ENCODE measurements at regions of chr14 and their contacts with region 1.

Region 1: DNA sequence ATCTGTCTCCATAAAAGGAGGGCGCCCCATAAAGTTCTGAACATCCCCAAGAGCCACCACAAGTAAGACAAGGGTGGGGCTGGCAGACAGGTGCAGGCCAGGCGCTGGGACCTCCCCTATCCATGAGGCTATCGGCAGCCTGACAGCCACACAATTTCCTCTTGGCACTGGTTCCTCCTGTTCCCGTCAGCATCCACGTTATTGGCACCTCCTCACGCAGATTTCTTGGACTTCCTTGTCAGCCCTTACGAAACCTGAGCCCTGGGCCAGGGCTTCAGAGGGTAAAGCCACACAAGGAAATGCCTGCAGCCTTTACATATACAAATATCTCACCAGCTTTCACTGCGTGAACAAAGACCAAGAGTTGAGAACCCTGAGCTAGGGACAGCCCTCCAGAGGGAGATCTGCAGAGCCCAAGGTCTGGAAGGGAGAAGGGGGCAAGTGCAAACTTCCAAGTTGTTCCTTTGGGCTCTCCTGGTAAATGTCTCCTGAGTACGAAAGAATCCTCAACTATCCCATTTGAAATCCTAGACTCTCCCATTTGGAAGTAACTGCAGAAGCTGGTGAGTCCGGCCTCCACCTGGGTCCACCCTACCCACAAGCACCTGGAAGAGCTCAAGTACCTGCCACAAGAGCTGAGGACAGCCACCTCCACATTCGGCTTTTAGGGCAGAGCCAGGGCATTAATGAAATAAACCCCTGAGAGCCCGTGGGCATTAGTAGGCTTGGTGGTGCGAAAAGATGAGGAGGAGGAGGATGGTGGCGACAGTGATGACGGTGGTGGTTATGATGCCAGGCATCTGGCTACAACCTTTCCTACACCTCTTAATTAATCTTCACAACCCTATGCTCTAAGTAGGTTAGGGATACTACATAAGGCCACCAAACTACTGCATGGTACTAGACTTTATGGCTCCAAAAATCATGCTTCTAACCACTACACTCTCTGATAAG is 5.5 kb upstream of the TC2N start:
- DNase-seq: peak; percentile 62 to 95
- H3K4me3 ChIP-seq: peak overlapping the region in 1 of 2 donors; percentile 18
- H3K27ac ChIP-seq: peak overlapping the region; percentile 77 to 78
- H3K4me1 ChIP-seq: peaks cover 13 to 20% of the 10 kb centered on the region in 2 donors
- H3K27me3 ChIP-seq: no peaks in the 10 kb centered on the region
- CTCF ChIP-seq: no peak

Region 2: GRCh38 chr14:91836119-91836881 is 36.5 kb before region 1 on chr14:
- intact Hi-C with region 1: loop called (anchors 2 kb)
- DNase-seq: peak; percentile 39 to 92
- H3K4me3 ChIP-seq: peak overlapping the region; percentile 75 to 80
- H3K27ac ChIP-seq: peak overlapping the region; percentile 91 to 93
- H3K4me1 ChIP-seq: peaks cover 0 to 9% of the 10 kb centered on the region in 2 donors
- H3K27me3 ChIP-seq: no peaks in the 10 kb centered on the region
- CTCF ChIP-seq: no peak

Region 3: GRCh38 chr14:91919814-91920213 is 47.0 kb after region 1 on chr14:
- intact Hi-C with region 1: loop called (anchors 5 kb)
- DNase-seq: no peak
- H3K4me3 ChIP-seq: no peak overlapping the region
- H3K27ac ChIP-seq: peak overlapping the region; percentile 80 to 91
- H3K4me1 ChIP-seq: peaks cover 30 to 76% of the 10 kb centered on the region in 2 donors
- H3K27me3 ChIP-seq: no peaks in the 10 kb centered on the region
- CTCF ChIP-seq: no peak